GM12878 (cell line): ENCODE measurements at regions of chr1 and their contacts with region 1.

Region 1: DNA sequence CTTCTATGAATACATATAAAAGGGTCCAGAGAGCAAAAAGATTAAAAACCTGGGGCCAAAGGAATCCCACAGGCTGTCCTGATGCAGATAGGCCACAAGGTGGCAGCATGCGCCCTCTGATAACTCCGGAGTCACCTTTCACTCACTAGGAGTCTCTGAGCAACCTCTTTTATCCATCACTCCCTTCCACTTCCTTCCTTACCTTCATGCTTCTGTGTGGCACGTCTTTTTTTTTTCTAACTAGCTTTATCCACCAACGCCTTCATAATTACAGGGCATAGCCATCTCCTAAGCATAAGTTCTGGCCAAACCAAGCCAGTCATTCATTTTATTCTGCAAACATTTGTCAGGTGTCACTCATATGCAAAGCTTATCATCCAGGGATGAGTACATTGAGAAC is 3.9 kb upstream of the PGLYRP4 start:
- DNase-seq: no peak
- ATAC-seq: peak; percentile 73
- H3K4me3 ChIP-seq: no peak overlapping the region
- H3K27ac ChIP-seq: no peak overlapping the region
- H3K4me1 ChIP-seq: peaks cover 12% of the 10 kb centered on the region
- H3K27me3 ChIP-seq: no peaks in the 10 kb centered on the region
- CTCF ChIP-seq: peak; percentile 80 to 88 (median 83)
- EP300 ChIP-seq: no peak
- POLR2A ChIP-seq: no peak
- RAD21 ChIP-seq: peak; percentile 82

Region 2: DNA sequence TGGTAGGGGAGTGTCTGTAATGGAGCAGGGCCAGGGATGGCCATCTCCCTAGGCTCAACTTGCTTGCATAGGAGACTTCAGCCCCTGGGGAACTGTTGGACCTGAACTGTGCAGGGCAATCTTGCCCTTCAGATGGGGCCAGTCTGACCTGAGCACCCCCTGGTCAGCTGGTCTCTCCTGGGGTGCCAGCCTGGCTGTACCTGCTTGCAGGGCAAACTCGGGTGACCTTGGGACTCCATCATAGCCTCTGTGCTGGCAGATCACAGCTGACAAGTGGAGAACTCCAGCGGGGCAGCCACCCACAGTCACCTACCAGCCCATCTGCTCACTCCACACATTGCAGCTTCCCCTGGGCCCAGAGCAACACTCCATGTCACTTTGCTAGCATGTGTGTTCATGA is 303.3 kb before region 1 on chr1:
- CTCF ChIA-PET with region 1: no interaction called
- POLR2A ChIA-PET with region 1: no interaction called
- RAD21 ChIA-PET with region 1: no interaction called
- SMC1A ChIA-PET with region 1: no interaction called
- in situ Hi-C with region 1: no loop called
- intact Hi-C with region 1: no loop called
- DNase-seq: no peak
- ATAC-seq: no peak
- H3K4me3 ChIP-seq: no peak overlapping the region
- H3K27ac ChIP-seq: no peak overlapping the region
- H3K4me1 ChIP-seq: no peaks in the 10 kb centered on the region
- H3K27me3 ChIP-seq: peaks cover 0 to 3% of the 10 kb centered on the region in 2 experiments; a peak in 1 of 4 replicates
- CTCF ChIP-seq: no peak
- EP300 ChIP-seq: no peak
- POLR2A ChIP-seq: no peak
- RAD21 ChIP-seq: no peak

Region 3: DNA sequence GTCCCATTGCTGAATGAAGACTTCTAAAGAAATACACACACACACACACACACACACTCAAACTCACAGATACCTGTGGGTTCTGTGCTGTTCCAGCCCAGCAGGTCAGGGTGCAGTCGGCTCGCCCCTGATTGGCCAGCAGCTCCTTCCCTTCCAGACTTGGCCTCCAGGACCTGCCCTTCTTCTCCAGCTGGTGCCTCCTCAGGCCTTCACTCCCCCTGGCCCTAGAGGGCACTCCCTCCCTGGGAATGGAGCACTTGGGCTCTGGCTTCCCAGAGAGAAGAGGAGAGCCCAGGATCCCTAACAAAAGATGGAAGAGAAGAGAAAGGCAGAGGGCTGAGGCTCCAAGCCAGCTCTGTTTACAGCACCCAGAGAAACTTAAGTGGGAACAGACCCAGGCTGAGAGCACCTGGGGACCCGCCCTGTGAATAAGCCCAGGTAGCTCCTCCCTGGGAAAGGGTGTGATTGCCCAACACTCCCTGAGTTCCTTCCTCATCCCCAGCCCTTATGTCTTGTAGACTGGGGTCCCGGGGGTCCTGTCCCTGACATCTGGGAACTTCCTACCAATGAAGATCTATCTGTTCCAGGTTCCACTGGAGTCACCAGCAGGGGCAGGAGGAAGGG is 39.8 kb before region 1 on chr1 and contains the start of gene PGLYRP3:
- CTCF ChIA-PET with region 1: interaction called, 40 read pairs
- POLR2A ChIA-PET with region 1: interaction called, 3 read pairs
- RAD21 ChIA-PET with region 1: interaction called, 6 read pairs
- SMC1A ChIA-PET with region 1: interaction called, 14 read pairs
- in situ Hi-C with region 1: no loop called
- intact Hi-C with region 1: no loop called
- DNase-seq: no peak
- ATAC-seq: no peak
- H3K4me3 ChIP-seq: no peak within 1 kb of the TSS
- H3K27ac ChIP-seq: no peak within 1 kb of the TSS
- H3K4me1 ChIP-seq: no peaks in the 10 kb centered on the region
- H3K27me3 ChIP-seq: no peaks in the 10 kb centered on the region
- CTCF ChIP-seq: peak in 2 of 3 experiments; percentile 25 to 36; a peak in 3 of 6 replicates
- EP300 ChIP-seq: no peak
- POLR2A ChIP-seq: no peak
- RAD21 ChIP-seq: peak; percentile 59
- polyA plus RNA-seq, gene PGLYRP3: not detected

Region 4: DNA sequence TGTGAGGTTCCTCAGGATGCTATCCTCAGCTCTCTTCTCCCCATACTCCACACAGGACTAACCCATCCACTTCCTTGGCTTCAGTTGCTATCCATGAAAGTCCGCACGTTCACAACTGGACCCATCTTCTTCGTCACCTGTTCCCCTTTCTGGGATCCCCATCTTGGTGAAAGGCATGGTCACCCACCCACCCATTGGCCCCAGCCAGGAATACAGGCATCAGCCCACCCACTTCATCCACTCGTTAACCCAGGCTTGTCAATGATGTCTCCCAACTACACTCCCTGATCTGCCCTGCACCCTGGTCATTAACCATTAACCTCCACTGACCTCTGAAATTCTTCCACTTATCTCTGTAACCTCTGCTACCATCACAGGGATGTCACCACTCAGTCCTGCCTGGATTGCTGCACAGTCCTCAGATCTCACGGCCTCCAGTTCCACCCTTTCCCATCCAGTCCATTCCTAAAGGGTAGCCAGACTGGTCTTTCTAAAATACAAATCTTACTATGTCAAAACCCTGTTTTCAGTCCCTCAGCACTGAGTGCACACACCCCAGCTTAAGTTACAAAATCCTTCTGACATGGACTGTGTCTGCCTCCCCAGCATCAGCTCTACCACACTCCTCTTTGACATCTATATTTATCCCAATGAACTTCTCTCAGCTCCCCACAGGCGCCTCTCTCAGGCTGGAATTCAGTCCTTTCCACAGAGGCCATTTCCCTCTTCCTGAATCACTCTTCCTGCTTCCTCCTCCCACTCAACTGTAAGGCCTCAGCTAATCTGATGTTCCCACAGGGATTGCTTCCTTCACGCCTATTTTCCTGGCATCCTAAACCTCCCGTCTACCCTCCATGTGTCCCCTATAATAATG is 14.3 kb before region 1 on chr1:
- CTCF ChIA-PET with region 1: interaction called, 54 read pairs
- POLR2A ChIA-PET with region 1: no interaction called
- RAD21 ChIA-PET with region 1: interaction called, 5 read pairs
- SMC1A ChIA-PET with region 1: interaction called, 27 read pairs
- in situ Hi-C with region 1: no loop called
- intact Hi-C with region 1: no loop called
- DNase-seq: no peak
- ATAC-seq: no peak
- H3K4me3 ChIP-seq: no peak overlapping the region
- H3K27ac ChIP-seq: no peak overlapping the region
- H3K4me1 ChIP-seq: peaks cover 9% of the 10 kb centered on the region
- H3K27me3 ChIP-seq: no peaks in the 10 kb centered on the region
- CTCF ChIP-seq: no peak
- EP300 ChIP-seq: no peak
- POLR2A ChIP-seq: no peak
- RAD21 ChIP-seq: no peak

Region 5: DNA sequence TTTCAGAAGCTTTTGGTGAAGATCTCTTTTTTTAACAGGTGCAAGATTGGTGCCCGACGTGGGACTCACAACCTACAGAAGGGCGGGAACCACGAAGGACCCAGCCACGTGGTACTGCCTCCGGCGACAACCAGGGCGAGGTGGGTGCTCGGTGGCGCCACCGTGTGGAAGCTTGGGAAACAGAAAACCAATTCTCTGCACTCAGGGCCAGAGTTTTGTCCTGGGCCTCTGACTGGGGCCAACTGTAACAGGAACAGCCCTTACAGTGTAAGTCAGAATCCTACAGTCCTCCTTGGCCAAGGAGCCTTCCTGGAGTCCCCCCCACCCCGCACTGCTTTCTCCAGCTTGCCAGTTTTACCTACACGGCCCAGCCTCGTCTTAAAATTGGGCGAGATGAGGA is 52.2 kb after region 1 on chr1:
- CTCF ChIA-PET with region 1: interaction called, 44 read pairs
- POLR2A ChIA-PET with region 1: no interaction called
- RAD21 ChIA-PET with region 1: interaction called, 5 read pairs
- SMC1A ChIA-PET with region 1: interaction called, 4 read pairs
- in situ Hi-C with region 1: no loop called
- intact Hi-C with region 1: loop called (anchors 1 kb)
- DNase-seq: no peak
- ATAC-seq: peak; percentile 81
- H3K4me3 ChIP-seq: no peak overlapping the region
- H3K27ac ChIP-seq: no peak overlapping the region
- H3K4me1 ChIP-seq: no peaks in the 10 kb centered on the region
- H3K27me3 ChIP-seq: peaks cover 0 to 2% of the 10 kb centered on the region in 2 experiments; a peak in 1 of 4 replicates
- CTCF ChIP-seq: peak; percentile 44 to 55 (median 51); a peak in 5 of 6 replicates
- EP300 ChIP-seq: no peak
- POLR2A ChIP-seq: no peak
- RAD21 ChIP-seq: 0 out of 2 replicates have a peak, but pooled peaks have one; percentile 34

Region 6: DNA sequence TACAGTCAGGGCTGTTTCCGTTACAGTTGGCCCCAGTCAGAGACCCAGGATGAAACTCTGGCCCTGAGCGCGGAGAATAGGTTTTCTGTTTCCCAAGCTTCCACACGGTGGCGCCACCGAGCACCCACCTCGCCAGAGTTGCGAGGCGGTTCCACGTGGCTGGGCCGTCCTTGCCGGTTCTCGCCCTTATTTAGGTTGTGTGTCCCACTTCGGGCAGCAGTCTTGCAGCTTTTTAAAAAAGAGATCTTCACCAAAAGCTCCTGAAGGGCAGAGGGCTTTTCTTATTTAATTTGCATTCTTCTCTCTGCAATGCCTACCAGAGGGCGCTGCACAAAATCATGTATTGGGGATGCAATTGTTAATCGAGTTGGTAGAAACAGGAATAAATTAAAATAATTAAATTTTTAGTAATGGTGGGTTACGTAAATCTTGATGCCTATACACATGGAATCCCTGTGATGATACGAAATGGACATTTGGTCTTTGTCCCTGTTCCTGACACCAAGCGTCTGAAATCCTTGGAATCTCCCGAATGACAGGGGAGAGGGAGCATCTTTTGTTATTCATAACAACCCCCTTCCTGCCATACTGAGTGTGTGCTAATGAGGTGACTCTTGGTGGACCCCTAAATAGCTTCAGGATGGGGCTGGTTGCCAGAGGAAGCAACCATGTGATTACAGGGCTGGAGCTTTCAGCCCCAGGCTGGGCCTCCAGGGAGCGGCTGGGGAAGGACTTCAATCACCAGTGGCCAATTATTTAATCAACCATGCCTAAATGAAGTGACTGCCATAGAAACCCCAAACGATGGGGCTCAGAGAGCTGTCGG is 113.5 kb after region 1 on chr1:
- CTCF ChIA-PET with region 1: interaction called, 15 read pairs
- POLR2A ChIA-PET with region 1: no interaction called
- RAD21 ChIA-PET with region 1: interaction called, 3 read pairs
- SMC1A ChIA-PET with region 1: interaction called, 3 read pairs
- in situ Hi-C with region 1: no loop called
- intact Hi-C with region 1: no loop called
- DNase-seq: no peak
- ATAC-seq: peak; percentile 94
- H3K4me3 ChIP-seq: no peak overlapping the region
- H3K27ac ChIP-seq: no peak overlapping the region
- H3K4me1 ChIP-seq: no peaks in the 10 kb centered on the region
- H3K27me3 ChIP-seq: peaks cover 0 to 3% of the 10 kb centered on the region in 2 experiments; a peak in 2 of 4 replicates
- CTCF ChIP-seq: peak; percentile 63 to 88 (median 84)
- EP300 ChIP-seq: no peak
- POLR2A ChIP-seq: no peak
- RAD21 ChIP-seq: peak; percentile 33